ENCODE measurements at regions of chr3 and their contacts with region 1.

Region 1: GRCh38 chr3:136752422-136753325 is 496 bp upstream of the STAG1 start:
- DNase-seq: peak; percentile 99

Region 2: DNA sequence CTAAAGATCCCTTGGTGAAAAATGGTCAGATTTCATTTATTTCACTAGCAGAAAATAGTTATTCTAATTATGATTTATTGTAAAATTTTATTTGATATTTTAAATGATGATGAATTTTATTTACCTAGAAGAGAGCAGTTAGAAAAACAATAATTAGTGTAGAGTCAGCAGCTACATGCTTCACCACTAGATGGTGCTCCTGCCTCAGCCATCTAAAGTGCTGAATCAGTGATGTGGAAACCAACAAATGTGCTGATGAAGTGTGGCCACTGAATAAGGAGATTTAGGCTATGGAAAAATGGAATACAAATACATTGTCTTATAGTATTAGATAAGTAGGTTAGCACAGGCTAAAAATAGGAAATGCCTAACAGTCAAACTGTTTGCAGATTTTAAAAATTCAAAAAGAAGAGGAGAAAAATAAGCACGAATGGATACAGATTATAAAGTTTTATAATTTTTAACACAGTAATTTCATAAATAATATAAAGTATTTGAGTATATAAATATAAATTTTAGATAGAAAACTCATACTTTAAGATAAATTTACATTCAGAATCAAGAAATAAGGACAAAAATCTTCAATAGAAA is 677.4 kb before region 1 on chr3:
- intact Hi-C with region 1: loop called (anchors 2 kb)
- DNase-seq: peak; percentile 81

Region 3: GRCh38 chr3:136250226-136250902 is 502.3 kb before region 1 on chr3 and contains the start of gene PCCB:
- intact Hi-C with region 1: loop called (anchors 5 kb)
- DNase-seq: peak; percentile 97
- total RNA-seq, gene PCCB: 91.3 TPM

Region 4: DNA sequence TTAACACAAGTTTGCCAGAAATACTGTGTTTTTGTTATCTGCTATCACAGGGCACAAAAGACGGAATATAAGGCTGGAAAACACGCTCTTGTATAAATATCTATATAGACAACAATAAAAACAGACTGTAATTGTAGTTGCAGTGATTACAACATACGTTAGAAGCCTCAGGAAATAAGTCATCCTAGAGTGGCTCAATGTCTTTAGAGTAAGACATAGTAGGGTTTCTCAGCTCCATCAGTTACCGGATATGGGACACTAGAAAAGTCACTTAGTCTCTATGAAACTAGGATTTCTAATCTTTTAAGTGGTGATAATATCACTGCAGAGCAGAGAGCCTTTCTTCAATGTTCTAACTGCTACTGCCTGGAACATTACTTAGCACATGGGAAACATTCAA is 209.3 kb before region 1 on chr3:
- intact Hi-C with region 1: loop called (anchors 5 kb)
- DNase-seq: no peak

Region 5: DNA sequence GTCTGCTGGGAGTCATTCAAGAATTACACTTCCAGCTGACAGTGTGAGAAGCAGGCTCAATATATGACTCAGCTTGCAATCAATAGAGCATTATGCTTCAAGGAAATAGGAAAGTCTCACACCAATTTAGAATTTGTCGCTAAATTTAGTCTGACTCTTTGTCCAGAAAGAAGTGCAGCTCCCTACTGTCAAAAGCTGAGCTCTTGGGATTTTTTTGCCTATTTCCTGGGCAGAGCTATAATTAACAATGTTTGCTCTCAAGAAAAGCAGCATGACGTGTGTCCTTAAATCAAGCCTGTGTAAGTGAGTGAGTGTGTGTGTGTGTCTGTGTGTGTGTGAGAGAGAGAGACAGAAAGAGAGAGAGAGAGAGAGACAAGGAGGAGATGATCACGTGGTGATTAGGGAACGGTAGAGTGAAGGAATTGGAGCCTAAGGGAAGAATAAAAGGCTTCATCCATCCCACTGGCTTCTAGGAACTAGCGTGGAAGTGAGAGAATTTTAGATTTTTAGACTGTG is 49.9 kb after region 1 on chr3:
- intact Hi-C with region 1: no loop called
- DNase-seq: no peak

Region 6: GRCh38 chr3:136861890-136862616 is 109.4 kb after region 1 on chr3 and contains the start of gene NCK1:
- intact Hi-C with region 1: loop called (anchors 1 kb)
- DNase-seq: peak; percentile 99
- total RNA-seq, gene NCK1: 22.1 TPM

Region 7: DNA sequence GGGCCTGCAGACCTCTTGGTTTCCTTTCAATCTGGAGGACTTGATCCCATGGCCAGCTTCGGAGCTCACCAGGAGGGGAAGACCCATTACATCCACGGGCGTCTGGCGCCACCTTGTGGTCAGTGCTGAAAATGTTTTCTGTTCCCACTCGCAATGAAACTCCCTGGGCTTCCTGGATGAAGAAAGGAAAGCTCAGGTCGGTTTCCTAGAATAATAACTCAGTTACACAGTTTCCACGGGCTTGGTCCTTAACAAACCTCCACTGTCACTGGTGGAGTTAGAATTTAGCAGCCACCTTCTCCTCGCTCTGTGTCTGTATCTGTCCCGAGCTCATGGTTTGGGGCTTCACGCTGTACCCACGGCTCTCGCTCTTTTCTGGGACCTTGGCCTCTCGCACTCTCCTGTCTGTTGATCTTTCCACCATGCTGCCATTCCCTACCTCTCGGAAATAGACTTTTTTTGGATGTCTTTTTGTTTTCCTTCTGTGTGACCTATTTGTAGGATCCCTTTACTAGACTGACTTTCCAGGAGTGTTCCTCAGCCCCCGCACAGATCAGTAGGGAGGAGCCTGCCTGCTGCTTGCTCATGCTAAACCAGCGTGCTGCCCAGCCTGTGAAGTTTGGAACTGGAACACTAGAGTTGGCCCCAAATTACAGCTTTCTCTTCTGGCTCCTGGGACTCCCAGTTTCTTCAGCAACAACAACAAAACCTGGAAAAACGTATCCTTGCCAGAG is 261.4 kb after region 1 on chr3:
- intact Hi-C with region 1: loop called (anchors 1 kb)
- DNase-seq: peak; percentile 94